ENCODE measurements at regions of chr12 and their contacts with region 1.

Region 1: DNA sequence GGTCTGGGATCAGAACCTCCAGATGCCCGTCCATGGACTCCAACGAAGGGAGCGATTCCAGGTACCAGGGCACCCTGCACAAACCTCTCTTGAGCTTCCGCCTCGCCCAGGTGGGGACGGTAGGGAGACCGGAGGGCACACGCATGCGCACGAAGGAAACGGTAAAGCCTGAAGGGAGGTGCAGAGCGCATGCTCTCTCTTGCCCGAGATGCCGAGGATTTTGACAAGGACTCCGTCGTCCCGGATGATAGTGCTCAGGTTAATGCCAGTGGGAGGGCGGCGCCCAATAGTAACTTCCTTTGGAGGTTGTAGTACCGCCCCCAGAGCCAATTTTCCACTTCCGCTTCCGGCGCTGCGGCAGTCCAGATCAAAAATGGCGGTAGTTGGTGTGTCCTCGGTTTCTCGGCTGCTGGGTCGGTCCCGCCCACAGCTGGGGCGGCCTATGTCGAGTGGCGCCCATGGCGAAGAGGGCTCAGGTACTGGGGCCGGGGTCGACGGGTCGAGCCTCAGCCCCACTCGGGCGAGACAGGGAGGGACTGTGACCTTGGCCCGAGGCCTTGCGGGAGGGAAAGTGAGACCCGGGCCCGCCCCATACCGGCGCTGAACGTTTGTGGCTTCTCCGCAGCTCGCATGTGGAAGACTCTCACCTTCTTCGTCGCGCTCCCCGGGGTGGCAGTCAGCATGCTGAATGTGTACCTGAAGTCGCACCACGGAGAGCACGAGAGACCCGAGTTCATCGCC is at the start of gene COX6A1:
- DNase-seq: peak; percentile 97 to 99
- H3K4me3 ChIP-seq: peak within 1 kb of the TSS; percentile 46
- H3K4me3 Mint-ChIP-seq: peak within 1 kb of the TSS; percentile 90
- H3K27ac Mint-ChIP-seq: peak within 1 kb of the TSS; percentile 70
- H3K4me1 ChIP-seq: no peaks in the 10 kb centered on the region
- H3K4me1 Mint-ChIP-seq: no peaks in the 10 kb centered on the region
- H3K27me3 ChIP-seq: no peaks in the 10 kb centered on the region
- H3K27me3 Mint-ChIP-seq: no peaks in the 10 kb centered on the region
- CTCF ChIP-seq: no peak
- total RNA-seq, gene COX6A1: 474 and 492 TPM in 2 replicates

Region 2: DNA sequence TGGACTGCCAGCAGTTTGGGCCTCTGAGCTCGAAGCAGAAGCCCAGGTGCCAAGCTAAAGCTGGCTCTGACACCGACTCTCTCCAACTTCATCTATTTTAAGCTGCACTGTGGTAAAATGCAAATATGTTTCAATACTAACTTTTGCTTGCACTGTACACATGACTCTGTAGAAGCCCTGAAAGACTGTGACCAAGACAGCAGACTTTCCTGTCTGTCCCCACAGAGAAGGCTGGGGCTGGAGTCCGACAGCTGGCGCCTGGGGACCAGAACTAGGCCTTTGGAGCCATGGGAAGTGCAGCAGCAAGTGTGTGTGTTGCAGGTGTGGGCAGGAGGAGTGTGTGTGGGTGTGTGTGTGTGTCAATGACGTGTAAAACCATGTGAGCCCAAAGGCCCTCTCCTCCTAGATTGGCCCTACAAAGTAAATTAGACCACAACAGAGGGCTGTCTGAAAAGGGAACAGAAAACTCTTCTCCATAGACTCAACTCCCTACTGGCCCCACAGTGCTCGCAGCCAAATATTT is 305.0 kb before region 1 on chr12:
- CTCF ChIA-PET with region 1: no interaction called
- POLR2A ChIA-PET with region 1: no interaction called
- intact Hi-C with region 1: no loop called
- DNase-seq: no peak
- H3K4me3 ChIP-seq: no peak overlapping the region
- H3K4me3 Mint-ChIP-seq: no peak overlapping the region
- H3K27ac Mint-ChIP-seq: no peak overlapping the region
- H3K4me1 ChIP-seq: no peaks in the 10 kb centered on the region
- H3K4me1 Mint-ChIP-seq: no peaks in the 10 kb centered on the region
- H3K27me3 ChIP-seq: no peaks in the 10 kb centered on the region
- H3K27me3 Mint-ChIP-seq: no peaks in the 10 kb centered on the region
- CTCF ChIP-seq: no peak

Region 3: GRCh38 chr12:120327593-120327992 is 110.3 kb before region 1 on chr12 and contains the start of gene PLA2G1B:
- CTCF ChIA-PET with region 1: interaction called, 3 read pairs
- POLR2A ChIA-PET with region 1: no interaction called
- intact Hi-C with region 1: loop called (anchors 2 kb)
- DNase-seq: no peak
- H3K4me3 ChIP-seq: no peak within 1 kb of the TSS
- H3K4me3 Mint-ChIP-seq: no peak within 1 kb of the TSS
- H3K27ac Mint-ChIP-seq: no peak within 1 kb of the TSS
- H3K4me1 ChIP-seq: no peaks in the 10 kb centered on the region
- H3K4me1 Mint-ChIP-seq: peaks cover 7% of the 10 kb centered on the region
- H3K27me3 ChIP-seq: no peaks in the 10 kb centered on the region
- H3K27me3 Mint-ChIP-seq: no peaks in the 10 kb centered on the region
- CTCF ChIP-seq: no peak
- total RNA-seq, gene PLA2G1B: not detected in 2 replicates

Region 4: DNA sequence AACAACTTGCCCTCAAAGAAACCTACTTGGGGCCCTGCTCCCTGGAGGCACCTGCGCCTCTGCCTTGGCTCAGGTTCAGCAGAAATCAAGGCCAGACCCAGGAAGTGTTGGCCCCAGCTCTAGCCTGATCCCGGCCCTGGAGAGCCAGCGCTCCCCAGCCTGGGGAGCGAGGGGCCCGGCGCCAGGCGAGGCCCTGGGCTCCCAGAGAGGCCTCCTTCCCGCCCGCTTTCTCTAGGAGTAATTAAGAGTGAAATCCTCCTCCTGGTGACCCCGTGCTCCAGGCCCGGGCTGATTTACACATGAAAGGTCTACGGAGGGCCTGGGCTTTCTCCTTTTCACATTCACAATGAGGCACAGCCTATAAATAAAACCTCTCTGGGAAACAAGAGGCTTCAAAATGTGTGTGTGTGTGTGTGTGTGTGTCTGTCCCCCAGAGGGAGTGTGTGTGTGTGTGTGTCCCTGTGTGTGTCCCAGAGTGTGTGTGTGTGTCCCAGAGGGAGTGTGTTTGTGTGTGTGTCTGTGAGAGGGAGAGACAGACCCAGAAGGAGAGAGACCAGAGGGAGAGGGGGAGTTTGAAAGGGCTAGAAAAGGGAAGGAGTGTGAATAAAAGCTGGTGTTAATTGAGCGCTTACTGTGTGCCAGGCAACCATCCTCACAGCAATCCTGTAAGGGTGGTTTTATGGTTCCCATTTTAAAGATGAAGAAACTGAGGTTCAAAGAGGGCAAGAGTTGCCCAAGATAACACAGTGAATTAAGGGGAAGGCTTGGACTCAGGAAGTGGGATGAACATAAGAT is 23.8 kb before region 1 on chr12:
- CTCF ChIA-PET with region 1: interaction called, 10 read pairs
- POLR2A ChIA-PET with region 1: interaction called, 3 read pairs
- intact Hi-C with region 1: no loop called
- DNase-seq: no peak
- H3K4me3 ChIP-seq: no peak overlapping the region
- H3K4me3 Mint-ChIP-seq: no peak overlapping the region
- H3K27ac Mint-ChIP-seq: no peak overlapping the region
- H3K4me1 ChIP-seq: no peaks in the 10 kb centered on the region
- H3K4me1 Mint-ChIP-seq: no peaks in the 10 kb centered on the region
- H3K27me3 ChIP-seq: no peaks in the 10 kb centered on the region
- H3K27me3 Mint-ChIP-seq: no peaks in the 10 kb centered on the region
- CTCF ChIP-seq: no peak